Activated T-helper 2 cell treated with anti-CD3 and anti-CD28 coated beads, Interferon-gamma antibody, Interleukin-2, Interleukin-4, amounts not matched to agents 10 μg/mL and 5 μg/mL and 100 μg/mL, durations not matched to agents 14 hours and 24 hours and 36 hours (primary cell): ENCODE measurements at regions of chrX and their contacts with region 1.

Region 1: GRCh38 chrX:53317365-53318069 is 36.1 kb upstream of the IQSEC2 start:
- DNase-seq: peak; percentile 37
- H3K4me3 Mint-ChIP-seq: no peak overlapping the region
- H3K27ac Mint-ChIP-seq: no peak overlapping the region
- H3K4me1 Mint-ChIP-seq: peaks cover 15% of the 10 kb centered on the region
- H3K27me3 Mint-ChIP-seq: peaks cover 37% of the 10 kb centered on the region

Region 2: DNA sequence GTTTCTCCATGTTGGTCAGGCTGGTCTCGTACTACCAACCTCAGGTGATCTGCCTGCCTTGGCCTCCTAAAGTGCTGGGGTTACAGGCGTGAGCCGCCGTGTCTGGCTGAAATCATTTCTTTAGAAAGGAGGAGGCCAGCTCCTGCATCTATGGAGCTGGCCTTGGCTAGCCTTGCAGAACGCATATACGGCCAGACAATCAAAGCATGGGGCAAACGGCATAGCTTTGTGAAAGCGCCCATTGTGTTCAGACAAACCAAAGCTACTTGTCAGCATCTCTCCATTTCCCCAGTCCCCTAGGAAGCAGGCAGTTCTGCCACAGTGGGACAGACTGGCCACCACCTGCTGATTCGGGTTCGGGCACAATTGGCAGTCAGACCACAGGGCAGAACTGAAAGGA is 12.8 kb after region 1 on chrX:
- intact Hi-C with region 1: no loop called
- DNase-seq: no peak
- H3K4me3 Mint-ChIP-seq: no peak overlapping the region
- H3K27ac Mint-ChIP-seq: no peak overlapping the region
- H3K4me1 Mint-ChIP-seq: no peaks in the 10 kb centered on the region
- H3K27me3 Mint-ChIP-seq: peaks cover 38% of the 10 kb centered on the region

Region 3: GRCh38 chrX:53374222-53374820 is 56.8 kb after region 1 on chrX:
- intact Hi-C with region 1: loop called (anchors 10 kb)
- DNase-seq: no peak
- H3K4me3 Mint-ChIP-seq: no peak overlapping the region
- H3K27ac Mint-ChIP-seq: no peak overlapping the region
- H3K4me1 Mint-ChIP-seq: no peaks in the 10 kb centered on the region
- H3K27me3 Mint-ChIP-seq: no peaks in the 10 kb centered on the region

Region 4: GRCh38 chrX:53412446-53412845 is 94.9 kb after region 1 on chrX:
- intact Hi-C with region 1: no loop called
- DNase-seq: no peak
- H3K4me3 Mint-ChIP-seq: no peak overlapping the region
- H3K27ac Mint-ChIP-seq: no peak overlapping the region
- H3K4me1 Mint-ChIP-seq: peaks cover under 1% of the 10 kb centered on the region
- H3K27me3 Mint-ChIP-seq: no peaks in the 10 kb centered on the region

Region 5: GRCh38 chrX:53445977-53446376 is 128.5 kb after region 1 on chrX:
- intact Hi-C with region 1: loop called (anchors 1 kb)
- DNase-seq: peak; percentile 32
- H3K4me3 Mint-ChIP-seq: no peak overlapping the region
- H3K27ac Mint-ChIP-seq: no peak overlapping the region
- H3K4me1 Mint-ChIP-seq: no peaks in the 10 kb centered on the region
- H3K27me3 Mint-ChIP-seq: no peaks in the 10 kb centered on the region

Region 6: DNA sequence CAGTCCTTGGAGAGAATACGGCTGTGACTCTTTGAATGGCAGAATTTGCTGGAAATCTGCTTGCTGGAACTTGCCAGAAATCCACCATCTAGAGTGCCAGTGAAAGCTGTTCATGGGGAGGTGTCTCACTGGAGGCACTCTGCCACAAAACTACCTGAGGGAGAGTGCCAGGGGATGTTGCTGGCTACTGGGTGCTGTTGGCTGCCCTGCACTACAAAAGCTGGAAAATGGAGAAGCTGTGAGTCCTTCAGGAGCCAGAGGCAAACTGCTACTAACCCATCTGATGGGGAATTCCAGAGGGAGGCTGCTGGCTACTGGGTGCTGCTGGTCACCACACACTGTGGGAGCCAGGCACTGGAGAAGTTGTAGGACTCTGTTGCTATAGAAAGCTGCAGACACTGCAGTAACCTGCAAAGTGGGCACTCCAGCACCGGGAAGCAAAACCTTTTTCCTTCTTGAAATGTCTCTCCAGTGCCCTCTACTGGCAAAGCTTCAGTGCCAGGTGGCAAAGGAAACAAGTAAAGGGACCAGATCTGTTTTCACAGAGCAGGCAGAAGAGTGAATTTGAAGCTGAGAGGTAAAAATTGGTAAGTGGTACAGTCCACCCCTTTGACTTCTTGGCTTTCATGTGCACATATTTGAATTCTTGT is 164.4 kb after region 1 on chrX:
- intact Hi-C with region 1: loop called (anchors 2 kb)
- DNase-seq: peak; percentile 11
- H3K4me3 Mint-ChIP-seq: no peak overlapping the region
- H3K27ac Mint-ChIP-seq: no peak overlapping the region
- H3K4me1 Mint-ChIP-seq: no peaks in the 10 kb centered on the region
- H3K27me3 Mint-ChIP-seq: peaks cover under 1% of the 10 kb centered on the region

Region 7: GRCh38 chrX:53768451-53768850 is 450.9 kb after region 1 on chrX:
- intact Hi-C with region 1: no loop called
- DNase-seq: no peak
- H3K4me3 Mint-ChIP-seq: no peak overlapping the region
- H3K27ac Mint-ChIP-seq: no peak overlapping the region
- H3K4me1 Mint-ChIP-seq: peaks cover 7% of the 10 kb centered on the region
- H3K27me3 Mint-ChIP-seq: no peaks in the 10 kb centered on the region